ENCODE measurements at regions of chr2 and their contacts with region 1.

Region 1: GRCh38 chr2:140695163-140695562 is 1435.7 kb downstream of the LRP1B start:
- DNase-seq: no peak
- H3K4me3 ChIP-seq: no peak overlapping the region
- H3K4me3 Mint-ChIP-seq: no peak overlapping the region
- H3K27ac Mint-ChIP-seq: no peak overlapping the region
- H3K4me1 ChIP-seq: no peaks in the 10 kb centered on the region
- H3K4me1 Mint-ChIP-seq: no peaks in the 10 kb centered on the region
- H3K27me3 ChIP-seq: no peaks in the 10 kb centered on the region
- H3K27me3 Mint-ChIP-seq: peaks cover 5% of the 10 kb centered on the region
- CTCF ChIP-seq: no peak

Region 2: GRCh38 chr2:140586379-140586778 is 108.8 kb before region 1 on chr2:
- CTCF ChIA-PET with region 1: no interaction called
- POLR2A ChIA-PET with region 1: no interaction called
- intact Hi-C with region 1: loop called (anchors 1 kb)
- DNase-seq: peak; percentile 41 to 57
- H3K4me3 ChIP-seq: no peak overlapping the region
- H3K4me3 Mint-ChIP-seq: no peak overlapping the region
- H3K27ac Mint-ChIP-seq: no peak overlapping the region
- H3K4me1 ChIP-seq: no peaks in the 10 kb centered on the region
- H3K4me1 Mint-ChIP-seq: no peaks in the 10 kb centered on the region
- H3K27me3 ChIP-seq: no peaks in the 10 kb centered on the region
- H3K27me3 Mint-ChIP-seq: peaks cover 8% of the 10 kb centered on the region
- CTCF ChIP-seq: peak; percentile 46 to 83

Region 3: DNA sequence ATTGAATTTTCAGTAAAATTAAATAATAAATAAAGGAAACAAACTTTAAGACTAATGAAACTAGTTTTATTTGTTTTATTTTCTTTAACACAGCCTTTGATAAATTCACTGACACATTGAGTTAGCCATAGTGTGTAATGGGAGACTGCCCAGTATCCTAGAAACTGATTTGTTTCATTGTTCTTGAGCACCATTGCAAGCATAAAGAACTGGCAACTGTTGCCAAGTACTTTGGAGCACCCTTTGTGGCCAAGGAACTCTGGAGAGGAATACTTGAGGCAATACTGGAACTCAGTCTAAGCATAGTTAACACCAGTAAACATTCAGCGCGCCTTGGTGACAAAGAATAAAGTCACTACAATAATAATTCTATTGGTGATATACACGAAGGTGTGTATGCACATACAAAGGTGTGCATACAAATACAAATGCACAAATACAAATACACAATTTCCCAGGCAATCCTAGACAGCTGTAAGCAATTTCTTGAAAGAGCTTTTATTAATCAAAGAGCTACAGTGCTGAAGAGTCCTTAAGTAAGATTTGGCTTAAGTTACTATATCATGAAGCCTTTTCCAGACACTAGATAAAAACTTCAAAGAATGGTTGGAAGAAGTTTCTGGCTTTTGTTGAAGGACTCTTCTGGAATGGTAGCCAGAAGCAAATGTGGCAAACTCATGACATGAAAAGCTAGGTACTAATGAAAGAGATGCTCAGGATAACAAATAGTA is 64.4 kb after region 1 on chr2:
- CTCF ChIA-PET with region 1: no interaction called
- POLR2A ChIA-PET with region 1: no interaction called
- intact Hi-C with region 1: no loop called
- DNase-seq: no peak
- H3K4me3 ChIP-seq: no peak overlapping the region
- H3K4me3 Mint-ChIP-seq: no peak overlapping the region
- H3K27ac Mint-ChIP-seq: no peak overlapping the region
- H3K4me1 ChIP-seq: no peaks in the 10 kb centered on the region
- H3K4me1 Mint-ChIP-seq: no peaks in the 10 kb centered on the region
- H3K27me3 ChIP-seq: no peaks in the 10 kb centered on the region
- H3K27me3 Mint-ChIP-seq: no peaks in the 10 kb centered on the region
- CTCF ChIP-seq: no peak